ENCODE measurements at regions of chr2 and their contacts with region 1.

Region 1: DNA sequence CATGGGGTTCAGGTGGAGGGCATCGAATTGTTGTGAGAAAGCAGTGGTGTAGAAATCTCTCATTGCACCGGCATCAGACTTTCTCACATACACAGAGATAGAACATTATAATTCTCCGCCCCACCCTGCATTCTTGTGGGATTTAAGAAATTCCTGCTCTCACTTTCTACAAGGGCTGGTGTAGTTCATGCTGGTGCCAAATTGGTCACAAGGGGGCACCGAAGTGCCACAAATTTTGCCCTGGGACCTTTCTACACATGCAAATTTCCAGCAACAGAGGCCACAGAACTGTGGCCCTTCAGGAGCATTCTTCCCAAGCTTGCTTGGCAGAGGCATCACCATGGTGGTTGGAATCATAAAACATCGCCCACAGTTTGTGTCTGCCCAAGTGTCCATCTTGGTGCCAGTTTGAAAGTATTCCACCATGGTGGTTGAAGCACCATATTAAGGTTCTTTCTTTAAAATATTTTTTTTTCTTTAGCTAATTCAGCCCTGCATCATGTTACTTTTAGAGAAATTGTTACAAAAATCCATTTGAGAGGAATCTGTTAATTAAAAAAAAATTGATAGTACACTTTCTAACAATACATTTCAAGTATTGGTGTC is 521.2 kb upstream of the FANCL start:
- DNase-seq: no peak
- H3K4me3 ChIP-seq: no peak overlapping the region
- H3K27ac ChIP-seq: no peak overlapping the region
- H3K4me1 ChIP-seq: no peaks in the 10 kb centered on the region
- H3K27me3 ChIP-seq: no peaks in the 10 kb centered on the region
- CTCF ChIP-seq: peak; percentile 30 to 63 (median 48)
- EP300 ChIP-seq: no peak
- POLR2A ChIP-seq: no peak

Region 2: DNA sequence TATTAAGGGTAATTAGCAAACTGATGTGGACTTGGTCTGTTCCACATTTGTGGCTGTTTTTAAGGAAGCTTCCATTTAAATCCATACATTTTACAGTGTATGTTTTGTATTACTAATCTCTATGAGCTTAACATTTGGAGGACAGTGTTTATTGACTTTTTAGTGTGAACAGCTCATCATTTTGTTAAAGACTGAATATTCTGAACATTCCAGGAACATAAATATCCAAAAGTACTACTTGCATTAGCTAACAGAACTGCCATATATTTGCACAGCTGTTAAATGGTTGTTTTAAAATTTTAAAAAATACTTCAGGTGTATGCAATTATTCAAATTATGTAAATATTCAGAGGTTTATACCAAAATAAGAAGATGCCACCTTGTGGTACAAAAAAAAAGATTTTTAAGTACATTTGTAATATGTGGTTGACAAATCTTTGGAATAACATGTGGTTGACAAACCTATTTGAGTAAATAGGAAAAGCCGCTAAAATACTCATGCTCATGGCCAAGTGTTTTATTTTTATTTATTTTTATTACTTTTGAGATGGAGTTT is 81.4 kb before region 1 on chr2:
- intact Hi-C with region 1: no loop called
- DNase-seq: no peak
- H3K4me3 ChIP-seq: no peak overlapping the region
- H3K27ac ChIP-seq: no peak overlapping the region
- H3K4me1 ChIP-seq: no peaks in the 10 kb centered on the region
- H3K27me3 ChIP-seq: no peaks in the 10 kb centered on the region
- CTCF ChIP-seq: no peak
- EP300 ChIP-seq: no peak
- POLR2A ChIP-seq: no peak

Region 3: GRCh38 chr2:59296279-59296678 is 534.0 kb after region 1 on chr2:
- intact Hi-C with region 1: loop called (anchors 10 kb)
- DNase-seq: no peak
- H3K4me3 ChIP-seq: no peak overlapping the region
- H3K27ac ChIP-seq: no peak overlapping the region
- H3K4me1 ChIP-seq: peaks cover 0 to 18% (median 14%) of the 10 kb centered on the region in 4 donors
- H3K27me3 ChIP-seq: no peaks in the 10 kb centered on the region
- CTCF ChIP-seq: no peak
- EP300 ChIP-seq: no peak
- POLR2A ChIP-seq: no peak

Region 4: DNA sequence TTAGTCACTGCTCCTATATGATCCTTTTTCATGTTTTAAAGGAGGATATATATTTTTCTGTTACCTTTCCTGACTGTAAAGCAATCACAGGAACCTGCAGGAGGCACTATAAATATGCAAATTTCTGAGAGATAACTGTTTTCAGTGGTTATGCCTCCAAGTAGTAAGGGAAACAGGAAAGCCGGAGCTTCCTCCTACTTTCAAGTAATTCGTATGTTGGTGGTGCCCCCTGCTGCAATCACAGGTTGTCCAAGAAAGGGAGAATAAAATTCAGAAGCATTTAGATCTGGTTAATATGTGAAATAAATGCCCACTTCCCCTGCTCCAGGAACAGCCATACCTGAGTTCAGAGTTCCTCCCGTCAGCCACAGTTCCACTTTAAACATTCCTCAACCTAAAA is 1803.2 kb after region 1 on chr2:
- intact Hi-C with region 1: loop called (anchors 5 kb)
- DNase-seq: no peak
- H3K4me3 ChIP-seq: no peak overlapping the region
- H3K27ac ChIP-seq: no peak overlapping the region
- H3K4me1 ChIP-seq: peaks cover 0 to 11% (median 5%) of the 10 kb centered on the region in 4 donors
- H3K27me3 ChIP-seq: peaks cover 4 to 26% (median 15%) of the 10 kb centered on the region in 3 donors
- CTCF ChIP-seq: peak in 2 of 4 experiments; percentile 31 to 38
- EP300 ChIP-seq: no peak
- POLR2A ChIP-seq: no peak

Region 5: DNA sequence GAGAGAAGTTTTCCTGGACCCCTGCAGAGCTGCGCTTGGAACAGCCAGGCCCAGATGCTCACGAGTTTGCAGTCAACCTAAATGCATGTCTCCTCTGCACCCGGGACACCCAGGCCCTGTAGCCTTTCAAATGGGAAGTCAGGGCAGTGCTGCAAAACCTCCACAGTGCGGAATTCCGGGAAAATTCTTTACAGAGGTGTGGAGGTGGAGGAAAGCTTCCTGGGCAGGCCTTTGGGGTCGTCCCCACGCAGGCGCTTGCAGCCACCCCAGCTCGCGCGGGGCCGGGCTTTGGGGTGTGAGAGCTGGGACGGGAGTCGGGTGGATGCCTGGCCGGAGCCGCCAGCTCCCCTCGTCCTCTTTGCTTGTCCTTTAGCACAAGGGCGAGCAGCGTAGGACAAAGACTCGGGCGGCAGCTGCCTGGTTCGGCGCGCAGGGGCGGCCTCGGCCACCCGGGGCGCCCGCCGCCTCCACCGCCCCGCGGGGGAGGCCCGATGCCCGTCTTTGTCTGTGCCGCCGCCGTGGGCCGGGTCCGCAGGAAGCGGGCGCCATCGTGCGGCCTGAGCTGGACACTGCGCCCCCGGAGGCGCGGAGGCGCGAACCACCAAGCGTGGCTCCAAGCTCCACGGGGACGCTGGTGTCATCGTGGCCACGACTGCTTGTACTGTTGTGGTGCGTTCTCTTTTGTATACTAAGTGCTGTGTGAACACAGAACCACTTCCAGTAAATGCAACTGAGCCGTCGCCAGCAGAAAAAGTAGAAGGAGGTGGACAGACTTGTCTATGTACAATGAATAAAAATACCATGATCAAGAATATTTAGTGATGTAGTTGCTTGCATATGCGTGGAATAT is 1819.4 kb after region 1 on chr2:
- intact Hi-C with region 1: loop called (anchors 2 kb)
- DNase-seq: peak; percentile 74
- H3K4me3 ChIP-seq: peak overlapping the region in 3 of 4 donors; percentile 43 to 52 (median 49)
- H3K27ac ChIP-seq: no peak overlapping the region
- H3K4me1 ChIP-seq: peaks cover 0 to 9% (median 8%) of the 10 kb centered on the region in 4 donors
- H3K27me3 ChIP-seq: no peaks in the 10 kb centered on the region
- CTCF ChIP-seq: peak in 3 of 4 experiments; percentile 53 to 97 (median 78)
- EP300 ChIP-seq: no peak
- POLR2A ChIP-seq: no peak